Activated CD4-positive, alpha-beta T cell treated with anti-CD3 and anti-CD28 coated beads, Interleukin-2, amount 10 ng/mL, durations not matched to agents 24 days and 14 days (primary cell): ENCODE measurements at regions of chr1 and their contacts with region 1.

Region 1: DNA sequence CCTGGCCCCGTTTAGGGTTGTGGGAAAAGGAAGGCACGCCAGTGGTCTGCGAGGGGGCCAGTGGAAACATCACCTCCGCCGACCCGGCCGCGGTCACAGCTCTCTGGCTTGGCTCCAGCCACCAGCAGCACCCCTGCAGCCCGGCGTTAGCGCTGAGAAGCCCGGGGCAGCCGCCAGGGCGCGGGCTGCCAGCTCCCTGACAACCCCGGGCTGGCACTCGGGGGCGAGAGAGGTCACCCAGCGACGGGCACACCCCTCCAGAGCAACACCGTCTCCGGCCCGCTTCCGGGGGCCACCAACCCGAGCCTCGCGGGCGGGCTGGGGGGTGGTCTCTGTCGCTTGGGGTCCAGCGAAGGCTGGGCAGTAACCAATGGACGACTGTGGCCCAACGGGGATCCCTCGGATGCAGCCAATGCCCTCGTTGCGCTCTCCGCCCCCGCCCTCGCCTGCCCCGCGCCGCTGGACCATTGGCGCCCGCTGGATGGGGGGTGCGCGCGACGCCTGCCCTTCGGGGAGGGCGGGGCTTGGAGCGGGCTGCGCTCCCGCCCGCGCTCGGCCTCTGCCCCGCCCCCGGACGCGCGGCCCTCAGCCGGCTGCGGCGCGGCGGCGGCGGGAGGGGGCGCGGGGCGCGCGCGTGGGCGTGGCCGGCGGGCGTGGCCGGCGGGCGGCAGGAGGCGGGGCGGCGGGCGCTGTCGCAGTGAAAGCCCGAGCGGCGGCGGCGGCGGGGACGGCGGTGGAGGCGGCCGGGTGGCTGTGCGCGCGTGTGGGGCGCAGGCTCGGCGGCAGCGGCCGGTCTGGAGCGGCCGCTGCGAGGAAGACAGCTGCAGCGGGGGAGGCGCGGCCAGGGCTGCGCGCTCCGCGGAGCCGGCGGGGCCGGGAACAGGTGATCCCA is at the start of gene MAN1C1:
- DNase-seq: peak; percentile 95
- H3K4me3 Mint-ChIP-seq: peak within 1 kb of the TSS; percentile 91
- H3K27ac Mint-ChIP-seq: peak within 1 kb of the TSS; percentile 47
- H3K4me1 Mint-ChIP-seq: peaks cover 54% of the 10 kb centered on the region
- H3K27me3 Mint-ChIP-seq: peaks cover 65% of the 10 kb centered on the region
- total RNA-seq, gene MAN1C1: 2.2 and 2.9 TPM in 2 replicates

Region 2: GRCh38 chr1:25549273-25550154 is 66.8 kb before region 1 on chr1:
- intact Hi-C with region 1: loop called (anchors 5 kb)
- DNase-seq: peak; percentile 90
- H3K4me3 Mint-ChIP-seq: peak overlapping the region; percentile 71
- H3K27ac Mint-ChIP-seq: peak overlapping the region; percentile 87
- H3K4me1 Mint-ChIP-seq: peaks cover 54% of the 10 kb centered on the region
- H3K27me3 Mint-ChIP-seq: peaks cover 4% of the 10 kb centered on the region

Region 3: GRCh38 chr1:25642574-25643108 is 26.3 kb after region 1 on chr1:
- intact Hi-C with region 1: loop called (anchors 2 kb)
- DNase-seq: peak; percentile 93
- H3K4me3 Mint-ChIP-seq: peak overlapping the region; percentile 69
- H3K27ac Mint-ChIP-seq: peak overlapping the region; percentile 6
- H3K4me1 Mint-ChIP-seq: peaks cover 38% of the 10 kb centered on the region
- H3K27me3 Mint-ChIP-seq: peaks cover 71% of the 10 kb centered on the region